Activated naive CD4-positive, alpha-beta T cell treated with anti-CD3 and anti-CD28 coated beads for 36 hours (primary cell): ENCODE measurements at regions of chr10 and their contacts with region 1.

Region 1: GRCh38 chr10:24724381-24725228 is 918 bp upstream of the ARHGAP21 start:
- DNase-seq: peak; percentile 97
- H3K4me3 Mint-ChIP-seq: peak overlapping the region; percentile 89
- H3K27ac Mint-ChIP-seq: peak overlapping the region; percentile 89
- H3K4me1 Mint-ChIP-seq: peaks cover 14% of the 10 kb centered on the region
- H3K27me3 Mint-ChIP-seq: no peaks in the 10 kb centered on the region

Region 2: GRCh38 chr10:23368816-23369640 is 1355.6 kb before region 1 on chr10:
- CTCF ChIA-PET with region 1: no interaction called
- intact Hi-C with region 1: loop called (anchors 10 kb)
- DNase-seq: peak; percentile 24
- H3K4me3 Mint-ChIP-seq: peak overlapping the region; percentile 14
- H3K27ac Mint-ChIP-seq: peak overlapping the region; percentile 73
- H3K4me1 Mint-ChIP-seq: peaks cover 63% of the 10 kb centered on the region
- H3K27me3 Mint-ChIP-seq: no peaks in the 10 kb centered on the region

Region 3: DNA sequence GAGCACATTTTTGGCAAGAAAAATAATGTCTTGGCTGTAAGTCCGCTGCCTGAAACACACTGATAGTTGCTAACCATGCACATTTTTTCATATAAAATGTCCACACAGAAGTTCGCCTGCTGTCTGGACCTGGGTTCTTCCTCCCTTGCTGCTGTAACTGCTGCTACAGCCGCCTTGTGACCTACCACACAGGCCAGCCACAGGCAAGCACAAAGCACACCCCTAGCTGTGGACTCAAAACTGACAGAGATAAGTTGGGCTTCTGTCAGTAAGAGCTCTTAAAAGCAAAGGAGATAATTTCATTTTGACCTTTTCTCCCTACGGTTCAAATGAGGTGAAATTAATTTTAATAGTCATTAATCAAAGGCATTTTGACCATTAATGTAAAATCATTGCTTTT is 931.0 kb before region 1 on chr10:
- CTCF ChIA-PET with region 1: no interaction called
- intact Hi-C with region 1: no loop called
- DNase-seq: no peak
- H3K4me3 Mint-ChIP-seq: no peak overlapping the region
- H3K27ac Mint-ChIP-seq: no peak overlapping the region
- H3K4me1 Mint-ChIP-seq: no peaks in the 10 kb centered on the region
- H3K27me3 Mint-ChIP-seq: peaks cover under 1% of the 10 kb centered on the region

Region 4: DNA sequence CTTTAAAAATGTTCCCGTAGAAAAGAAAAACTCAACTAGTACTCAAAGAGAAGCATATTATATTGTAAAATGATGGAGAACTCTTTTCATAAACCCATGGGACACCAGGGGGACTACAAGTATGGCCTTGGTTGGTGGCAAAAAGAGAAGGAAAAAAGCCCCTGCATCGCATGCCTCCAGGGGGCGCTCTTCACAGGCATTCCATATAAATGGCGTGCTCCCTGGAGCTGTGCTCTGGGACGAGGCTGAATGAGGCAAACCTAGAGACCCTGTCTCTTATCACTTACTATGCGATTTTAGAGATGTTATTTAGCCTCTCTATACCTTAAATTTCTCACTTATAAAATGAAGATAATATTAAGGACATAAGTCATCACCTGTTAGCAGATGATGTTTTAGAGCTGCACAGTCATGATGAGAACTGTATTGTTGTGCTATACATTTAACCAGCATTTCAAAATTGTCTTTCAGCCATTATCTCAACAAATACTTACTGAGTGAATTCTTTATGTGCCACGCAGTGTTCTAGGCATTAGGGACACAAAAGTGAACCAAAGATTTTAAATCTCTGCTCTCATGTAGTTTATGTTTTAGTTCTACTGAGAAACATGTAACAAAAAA is 106.7 kb before region 1 on chr10:
- CTCF ChIA-PET with region 1: interaction called, 8 read pairs
- intact Hi-C with region 1: loop called (anchors 1 kb)
- DNase-seq: peak; percentile 70
- H3K4me3 Mint-ChIP-seq: peak overlapping the region; percentile 3
- H3K27ac Mint-ChIP-seq: no peak overlapping the region
- H3K4me1 Mint-ChIP-seq: peaks cover 29% of the 10 kb centered on the region
- H3K27me3 Mint-ChIP-seq: no peaks in the 10 kb centered on the region

Region 5: DNA sequence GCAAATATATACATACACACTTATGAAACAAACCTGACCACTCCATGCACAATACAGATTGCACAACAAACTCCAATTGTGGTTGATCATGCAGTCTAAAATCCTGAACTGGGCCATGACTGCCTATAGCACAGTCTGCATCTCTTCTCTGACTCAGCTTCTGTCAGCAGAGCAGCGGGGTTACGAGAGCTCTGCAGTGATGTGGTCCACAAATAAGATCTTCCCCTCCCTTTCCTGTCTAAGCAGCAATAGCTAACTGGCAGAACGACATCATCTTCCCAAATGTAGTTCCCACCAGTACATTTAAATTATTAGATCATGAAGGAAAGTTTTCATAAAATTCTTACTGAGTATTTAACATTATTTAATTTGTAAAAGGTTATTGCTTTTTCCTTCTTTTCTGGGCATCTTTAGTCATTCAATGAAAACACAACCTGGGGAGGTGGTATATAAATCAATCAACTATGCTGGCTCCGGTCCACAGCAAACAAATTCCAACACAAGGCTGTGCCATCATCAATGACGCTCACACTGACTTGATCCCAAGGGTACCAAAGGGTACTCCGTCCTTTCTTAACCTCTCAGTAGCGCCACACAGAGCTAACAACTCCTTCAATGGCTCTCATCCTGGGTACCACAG is 18.0 kb before region 1 on chr10:
- CTCF ChIA-PET with region 1: interaction called, 5 read pairs
- intact Hi-C with region 1: loop called (anchors 1 kb)
- DNase-seq: peak; percentile 58
- H3K4me3 Mint-ChIP-seq: no peak overlapping the region
- H3K27ac Mint-ChIP-seq: no peak overlapping the region
- H3K4me1 Mint-ChIP-seq: peaks cover 5% of the 10 kb centered on the region
- H3K27me3 Mint-ChIP-seq: peaks cover 2% of the 10 kb centered on the region

Region 6: DNA sequence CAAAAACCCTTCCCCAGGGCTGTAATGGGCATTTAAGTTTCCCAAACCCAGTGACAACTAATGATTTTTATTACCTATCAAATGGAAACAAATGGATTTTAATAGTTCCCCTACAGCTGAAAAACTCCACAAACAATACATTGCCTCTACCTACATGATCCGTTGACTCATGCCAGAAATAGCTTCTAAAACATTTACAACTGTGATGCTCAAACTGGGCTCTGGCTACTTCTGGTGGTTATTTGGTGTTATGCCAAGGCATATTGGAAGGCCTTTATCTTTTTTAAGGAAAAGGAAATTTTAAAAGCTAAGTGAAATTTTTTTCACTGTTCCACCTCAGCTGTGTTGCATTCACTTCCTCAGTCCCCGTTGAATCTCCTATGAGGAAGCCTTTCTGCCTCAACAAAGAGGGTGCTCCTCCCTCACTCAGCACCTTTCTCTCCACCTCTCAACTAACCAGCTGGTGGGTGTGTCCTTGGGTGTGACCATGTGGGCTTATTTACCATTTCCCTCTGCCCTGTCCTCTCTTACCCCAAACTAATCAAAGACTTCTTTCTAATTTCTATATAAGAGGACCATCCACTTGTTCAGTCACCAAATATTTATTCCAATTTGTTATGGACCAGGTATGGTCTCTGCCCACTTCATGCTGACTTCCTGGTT is 144.9 kb after region 1 on chr10:
- CTCF ChIA-PET with region 1: no interaction called
- intact Hi-C with region 1: no loop called
- DNase-seq: no peak
- H3K4me3 Mint-ChIP-seq: no peak overlapping the region
- H3K27ac Mint-ChIP-seq: no peak overlapping the region
- H3K4me1 Mint-ChIP-seq: peaks cover 24% of the 10 kb centered on the region
- H3K27me3 Mint-ChIP-seq: no peaks in the 10 kb centered on the region

Region 7: DNA sequence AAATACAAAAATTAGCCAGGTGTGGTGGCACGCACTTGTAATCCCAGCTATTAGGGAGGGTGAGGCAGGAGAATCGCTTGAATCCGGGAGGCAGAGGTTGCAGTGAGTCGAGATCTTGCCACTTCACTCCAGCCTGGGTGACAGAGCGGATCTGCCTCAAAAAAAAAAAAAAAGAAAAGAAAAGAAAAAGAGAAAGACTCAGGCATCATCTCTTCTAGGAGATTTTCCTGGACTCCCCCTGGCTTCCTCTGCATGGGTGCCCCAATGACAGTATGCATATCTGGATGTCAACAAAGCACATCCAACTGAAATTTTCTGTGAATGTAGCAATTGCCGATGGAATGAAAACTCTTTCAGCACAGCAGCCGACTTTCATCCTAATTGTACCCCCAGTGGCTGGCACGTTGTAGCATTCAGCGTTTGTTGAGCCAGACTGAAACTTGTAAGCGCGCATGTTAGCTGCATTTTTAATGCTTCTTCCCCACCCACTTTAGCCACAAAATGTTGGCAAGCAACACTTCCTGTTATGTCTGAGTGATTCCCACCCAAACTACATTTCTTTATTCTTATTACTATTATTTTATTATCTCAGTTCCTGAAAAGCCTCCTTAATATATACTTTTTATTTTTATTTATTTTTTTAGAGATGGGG is 157.6 kb after region 1 on chr10:
- CTCF ChIA-PET with region 1: no interaction called
- intact Hi-C with region 1: loop called (anchors 2 kb)
- DNase-seq: peak; percentile 71
- H3K4me3 Mint-ChIP-seq: peak overlapping the region; percentile 13
- H3K27ac Mint-ChIP-seq: no peak overlapping the region
- H3K4me1 Mint-ChIP-seq: peaks cover 44% of the 10 kb centered on the region
- H3K27me3 Mint-ChIP-seq: no peaks in the 10 kb centered on the region

Region 8: DNA sequence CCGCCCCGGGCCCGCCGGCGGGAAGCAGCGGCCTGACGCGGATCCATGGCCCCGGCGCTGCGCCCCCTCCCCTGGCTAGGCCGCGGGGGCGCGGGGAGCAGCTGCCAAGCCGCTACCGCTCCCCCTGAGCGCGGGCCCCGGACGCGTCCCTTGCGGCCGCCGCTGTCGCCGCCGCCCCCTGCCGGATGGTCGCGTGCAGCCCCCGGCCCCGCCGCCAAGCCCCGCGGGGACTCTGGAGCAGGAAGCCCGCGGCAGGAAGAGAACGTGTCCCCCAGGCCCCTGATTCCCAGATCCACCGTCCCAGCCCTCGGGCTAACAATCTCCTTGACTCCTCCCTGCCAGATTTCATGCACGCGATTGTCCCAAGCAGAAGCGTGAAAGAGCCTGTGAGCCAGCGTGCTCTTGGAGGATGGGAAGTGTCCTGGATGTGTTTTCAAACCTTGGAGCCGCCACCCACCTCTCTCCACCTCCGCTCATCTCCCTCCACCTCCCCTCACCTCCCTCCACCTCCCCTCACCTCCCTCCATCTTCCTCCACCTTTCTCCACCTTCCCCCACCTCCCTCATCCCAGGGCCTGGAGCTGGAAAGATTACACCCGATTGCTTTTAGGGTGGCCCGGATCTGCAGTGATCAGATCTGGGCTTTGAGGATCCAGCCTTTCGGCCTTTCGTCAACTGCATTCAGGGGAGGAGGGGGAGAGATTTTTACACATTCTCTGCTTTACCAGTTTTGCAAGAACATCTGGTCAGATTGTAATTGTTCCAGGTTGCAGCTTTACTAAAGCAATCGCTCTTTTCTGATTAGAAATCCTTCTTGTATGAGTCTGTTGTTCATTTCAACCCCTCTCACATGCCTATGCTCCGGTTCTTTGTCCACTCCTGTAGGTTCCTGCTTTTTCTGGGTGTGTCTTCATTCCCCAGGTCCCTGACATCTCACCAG is 228.4 kb after region 1 on chr10:
- CTCF ChIA-PET with region 1: no interaction called
- intact Hi-C with region 1: loop called (anchors 1 kb)
- DNase-seq: peak; percentile 39
- H3K4me3 Mint-ChIP-seq: peak overlapping the region; percentile 72
- H3K27ac Mint-ChIP-seq: no peak overlapping the region
- H3K4me1 Mint-ChIP-seq: peaks cover 14% of the 10 kb centered on the region
- H3K27me3 Mint-ChIP-seq: no peaks in the 10 kb centered on the region

Region 9: GRCh38 chr10:24962995-24963394 is 238.4 kb after region 1 on chr10:
- CTCF ChIA-PET with region 1: no interaction called
- intact Hi-C with region 1: no loop called
- DNase-seq: no peak
- H3K4me3 Mint-ChIP-seq: no peak overlapping the region
- H3K27ac Mint-ChIP-seq: no peak overlapping the region
- H3K4me1 Mint-ChIP-seq: peaks cover 2% of the 10 kb centered on the region
- H3K27me3 Mint-ChIP-seq: peaks cover 3% of the 10 kb centered on the region

Region 10: GRCh38 chr10:25059764-25060389 is 335.3 kb after region 1 on chr10:
- CTCF ChIA-PET with region 1: no interaction called
- intact Hi-C with region 1: loop called (anchors 2 kb)
- DNase-seq: no peak
- H3K4me3 Mint-ChIP-seq: no peak overlapping the region
- H3K27ac Mint-ChIP-seq: no peak overlapping the region
- H3K4me1 Mint-ChIP-seq: peaks cover 18% of the 10 kb centered on the region
- H3K27me3 Mint-ChIP-seq: no peaks in the 10 kb centered on the region